ENCODE measurements at regions of chr4 and their contacts with region 1.

Region 1: GRCh38 chr4:151887031-151887815 is 126.4 kb upstream of the GATB start:
- DNase-seq: peak; percentile 87
- ATAC-seq: peak; percentile 82
- H3K4me3 ChIP-seq: no peak overlapping the region
- H3K27ac ChIP-seq: peak overlapping the region; percentile 80
- H3K4me1 ChIP-seq: peaks cover 41% of the 10 kb centered on the region
- H3K27me3 ChIP-seq: no peaks in the 10 kb centered on the region
- CTCF ChIP-seq: no peak
- EP300 ChIP-seq: peak; percentile 55 to 85; a peak in 1 of 4 replicates
- POLR2A ChIP-seq: no peak
- RAD21 ChIP-seq: no peak

Region 2: DNA sequence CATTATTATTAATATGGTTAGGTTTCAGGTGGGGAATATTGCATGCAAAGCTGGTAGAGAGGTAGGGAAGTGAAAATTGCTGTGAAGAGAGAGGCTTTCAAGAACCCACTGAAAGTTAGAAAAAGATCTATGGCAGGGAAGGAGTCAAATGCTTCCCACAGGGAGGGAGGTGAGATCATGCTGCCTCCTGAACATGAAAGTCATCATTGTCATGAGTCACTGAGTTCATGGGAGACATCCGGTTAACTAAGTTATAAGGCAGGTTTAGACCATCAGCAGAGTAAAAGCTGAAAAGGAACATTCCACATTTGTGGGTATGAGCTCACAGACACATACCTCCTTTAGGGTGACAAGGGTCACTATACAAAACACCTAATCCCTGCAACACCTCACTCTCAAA is 142.6 kb before region 1 on chr4:
- CTCF ChIA-PET with region 1: interaction called, 7 read pairs
- POLR2A ChIA-PET with region 1: no interaction called
- RAD21 ChIA-PET with region 1: interaction called, 11 read pairs
- SMC1A ChIA-PET with region 1: interaction called, 3 read pairs
- in situ Hi-C with region 1: no loop called
- intact Hi-C with region 1: loop called (anchors 1 kb)
- DNase-seq: peak; percentile 44
- ATAC-seq: peak; percentile 66
- H3K4me3 ChIP-seq: no peak overlapping the region
- H3K27ac ChIP-seq: peak overlapping the region; percentile 73
- H3K4me1 ChIP-seq: peaks cover 23% of the 10 kb centered on the region
- H3K27me3 ChIP-seq: no peaks in the 10 kb centered on the region
- CTCF ChIP-seq: no peak
- EP300 ChIP-seq: peak in 1 of 2 experiments; percentile 67; a peak in 1 of 4 replicates
- POLR2A ChIP-seq: no peak
- RAD21 ChIP-seq: no peak

Region 3: DNA sequence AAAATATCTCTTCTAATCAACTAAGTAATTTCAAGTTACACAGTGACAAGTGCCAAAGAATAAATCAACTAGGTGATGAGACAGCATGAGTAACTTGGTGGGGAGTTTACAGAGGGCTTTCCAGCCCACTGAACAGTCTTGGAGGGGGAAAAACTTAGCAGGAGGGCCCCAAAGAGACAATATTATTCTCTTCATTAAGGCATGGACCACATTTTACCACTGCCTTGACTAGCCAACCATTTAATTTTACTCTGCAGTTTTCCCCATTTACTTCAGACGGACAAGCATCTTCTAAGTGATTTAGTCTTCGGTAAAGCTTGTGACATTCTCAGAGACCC is 101.1 kb before region 1 on chr4:
- CTCF ChIA-PET with region 1: no interaction called
- POLR2A ChIA-PET with region 1: no interaction called
- RAD21 ChIA-PET with region 1: no interaction called
- SMC1A ChIA-PET with region 1: no interaction called
- in situ Hi-C with region 1: no loop called
- intact Hi-C with region 1: loop called (anchors 1 kb)
- DNase-seq: no peak
- ATAC-seq: peak; percentile 61
- H3K4me3 ChIP-seq: no peak overlapping the region
- H3K27ac ChIP-seq: no peak overlapping the region
- H3K4me1 ChIP-seq: no peaks in the 10 kb centered on the region
- H3K27me3 ChIP-seq: no peaks in the 10 kb centered on the region; a peak in 1 of 4 replicates
- CTCF ChIP-seq: no peak
- EP300 ChIP-seq: no peak
- POLR2A ChIP-seq: no peak
- RAD21 ChIP-seq: no peak

Region 4: GRCh38 chr4:151905197-151905596 is 18.0 kb after region 1 on chr4:
- CTCF ChIA-PET with region 1: interaction called, 4 read pairs
- POLR2A ChIA-PET with region 1: interaction called, 3 read pairs
- RAD21 ChIA-PET with region 1: interaction called, 8 read pairs
- SMC1A ChIA-PET with region 1: interaction called, 23 read pairs
- in situ Hi-C with region 1: no loop called
- intact Hi-C with region 1: no loop called
- DNase-seq: peak; percentile 33
- ATAC-seq: peak; percentile 96
- H3K4me3 ChIP-seq: no peak overlapping the region
- H3K27ac ChIP-seq: no peak overlapping the region
- H3K4me1 ChIP-seq: peaks cover 14% of the 10 kb centered on the region; the same call in 1 of the 2 replicates
- H3K27me3 ChIP-seq: no peaks in the 10 kb centered on the region
- CTCF ChIP-seq: no peak
- EP300 ChIP-seq: no peak
- POLR2A ChIP-seq: no peak
- RAD21 ChIP-seq: no peak

Region 5: GRCh38 chr4:152278505-152279233 is 391.4 kb after region 1 on chr4:
- CTCF ChIA-PET with region 1: no interaction called
- POLR2A ChIA-PET with region 1: no interaction called
- RAD21 ChIA-PET with region 1: interaction called, 3 read pairs
- SMC1A ChIA-PET with region 1: no interaction called
- in situ Hi-C with region 1: no loop called
- intact Hi-C with region 1: loop called (anchors 1 kb)
- DNase-seq: peak; percentile 71
- ATAC-seq: peak; percentile 87
- H3K4me3 ChIP-seq: no peak overlapping the region
- H3K27ac ChIP-seq: no peak overlapping the region
- H3K4me1 ChIP-seq: no peaks in the 10 kb centered on the region
- H3K27me3 ChIP-seq: no peaks in the 10 kb centered on the region; a peak in 1 of 4 replicates
- CTCF ChIP-seq: no peak
- EP300 ChIP-seq: no peak; a peak in 1 of 4 replicates
- POLR2A ChIP-seq: no peak
- RAD21 ChIP-seq: no peak

Region 6: DNA sequence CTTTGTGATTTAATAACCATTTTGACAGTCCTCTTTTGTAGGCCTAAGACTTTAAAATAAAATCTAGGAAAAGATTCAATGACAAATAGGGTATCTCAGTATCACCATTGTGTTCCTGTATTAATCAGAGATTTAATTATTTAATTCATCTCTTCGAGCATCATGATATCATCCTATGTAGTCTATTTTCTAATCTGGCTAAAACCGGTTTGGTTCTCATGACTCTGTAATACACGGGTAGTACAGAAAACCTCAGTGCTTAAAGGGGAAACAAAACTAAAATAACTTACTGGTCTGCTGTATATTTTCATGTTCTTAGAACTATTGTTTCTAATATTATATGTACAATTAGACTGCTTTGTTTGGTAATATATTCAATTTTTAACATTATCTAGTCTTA is 672.4 kb after region 1 on chr4:
- CTCF ChIA-PET with region 1: no interaction called
- POLR2A ChIA-PET with region 1: no interaction called
- RAD21 ChIA-PET with region 1: no interaction called
- SMC1A ChIA-PET with region 1: no interaction called
- in situ Hi-C with region 1: no loop called
- intact Hi-C with region 1: loop called (anchors 5 kb)
- DNase-seq: no peak
- ATAC-seq: peak; percentile 56
- H3K4me3 ChIP-seq: no peak overlapping the region
- H3K27ac ChIP-seq: peak overlapping the region; percentile 81
- H3K4me1 ChIP-seq: peaks cover 75% of the 10 kb centered on the region
- H3K27me3 ChIP-seq: no peaks in the 10 kb centered on the region
- CTCF ChIP-seq: no peak
- EP300 ChIP-seq: no peak
- POLR2A ChIP-seq: no peak
- RAD21 ChIP-seq: no peak